ENCODE measurements at regions of chr22 and their contacts with region 1.

Region 1: GRCh38 chr22:46762238-46763050 is at the start of gene TBC1D22A:
- DNase-seq: peak; percentile 94 to 97
- ATAC-seq: peak; percentile 88 to 94 (median 91)
- H3K4me3 ChIP-seq: peak within 1 kb of the TSS; percentile 96
- H3K4me3 Mint-ChIP-seq: peak within 1 kb of the TSS; percentile 99
- H3K27ac ChIP-seq: peak within 1 kb of the TSS; percentile 92
- H3K27ac Mint-ChIP-seq: peak within 1 kb of the TSS; percentile 99 to 100
- H3K4me1 ChIP-seq: peaks cover 46% of the 10 kb centered on the region
- H3K4me1 Mint-ChIP-seq: peaks cover 62 to 66% of the 10 kb centered on the region in 2 donors
- H3K27me3 ChIP-seq: no peaks in the 10 kb centered on the region
- H3K27me3 Mint-ChIP-seq: no peaks in the 10 kb centered on the region
- CTCF ChIP-seq: no peak
- total RNA-seq, gene TBC1D22A: 47.4 to 53.7 (median 53.2) TPM

Region 2: GRCh38 chr22:46739094-46739870 is 23.2 kb before region 1 on chr22:
- intact Hi-C with region 1: loop called (anchors 1 kb)
- DNase-seq: peak; percentile 61 to 87
- ATAC-seq: peak; percentile 60 to 74 (median 73)
- H3K4me3 ChIP-seq: no peak overlapping the region
- H3K4me3 Mint-ChIP-seq: peak overlapping the region; percentile 87
- H3K27ac ChIP-seq: peak overlapping the region; percentile 57
- H3K27ac Mint-ChIP-seq: peak overlapping the region; percentile 76 to 81
- H3K4me1 ChIP-seq: peaks cover 44% of the 10 kb centered on the region
- H3K4me1 Mint-ChIP-seq: peaks cover 32 to 45% of the 10 kb centered on the region in 2 donors
- H3K27me3 ChIP-seq: no peaks in the 10 kb centered on the region
- H3K27me3 Mint-ChIP-seq: no peaks in the 10 kb centered on the region
- CTCF ChIP-seq: peak; percentile 39

Region 3: DNA sequence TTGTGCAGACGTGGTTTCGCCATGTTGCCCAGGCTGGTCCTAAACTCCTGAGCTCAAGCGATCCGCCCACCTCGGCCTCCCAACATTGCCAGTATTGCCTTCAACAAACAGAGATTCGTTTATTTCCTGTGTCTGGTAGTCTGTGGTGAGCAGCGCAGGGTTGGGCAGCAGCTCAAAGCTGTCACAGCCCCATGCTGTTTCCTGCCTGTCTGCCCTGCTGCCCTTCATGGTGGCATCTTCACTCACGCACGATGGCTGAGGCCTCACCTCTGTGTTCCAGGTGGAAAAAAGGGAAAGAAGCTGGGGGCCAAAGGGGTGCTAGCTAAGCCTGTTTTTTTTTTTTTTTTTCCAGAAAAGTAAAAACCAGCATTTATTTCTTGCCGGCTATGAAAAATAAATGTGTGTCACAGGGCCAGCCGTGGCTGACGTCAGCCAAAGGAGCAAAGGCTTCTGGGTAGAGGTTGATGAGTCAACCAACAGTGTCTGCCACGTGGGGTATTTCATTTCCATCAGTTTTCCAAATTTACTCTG is 28.8 kb after region 1 on chr22:
- intact Hi-C with region 1: loop called (anchors 1 kb)
- DNase-seq: peak; percentile 76 to 93
- ATAC-seq: peak; percentile 90 to 95 (median 95)
- H3K4me3 ChIP-seq: peak overlapping the region; percentile 2
- H3K4me3 Mint-ChIP-seq: peak overlapping the region; percentile 83
- H3K27ac ChIP-seq: peak overlapping the region; percentile 92
- H3K27ac Mint-ChIP-seq: peak overlapping the region; percentile 97 to 99
- H3K4me1 ChIP-seq: peaks cover 49% of the 10 kb centered on the region
- H3K4me1 Mint-ChIP-seq: peaks cover 47% of the 10 kb centered on the region in 2 donors
- H3K27me3 ChIP-seq: no peaks in the 10 kb centered on the region
- H3K27me3 Mint-ChIP-seq: no peaks in the 10 kb centered on the region
- CTCF ChIP-seq: no peak